G401 (cell line): ENCODE measurements at regions of chr10 and their contacts with region 1.

Region 1: DNA sequence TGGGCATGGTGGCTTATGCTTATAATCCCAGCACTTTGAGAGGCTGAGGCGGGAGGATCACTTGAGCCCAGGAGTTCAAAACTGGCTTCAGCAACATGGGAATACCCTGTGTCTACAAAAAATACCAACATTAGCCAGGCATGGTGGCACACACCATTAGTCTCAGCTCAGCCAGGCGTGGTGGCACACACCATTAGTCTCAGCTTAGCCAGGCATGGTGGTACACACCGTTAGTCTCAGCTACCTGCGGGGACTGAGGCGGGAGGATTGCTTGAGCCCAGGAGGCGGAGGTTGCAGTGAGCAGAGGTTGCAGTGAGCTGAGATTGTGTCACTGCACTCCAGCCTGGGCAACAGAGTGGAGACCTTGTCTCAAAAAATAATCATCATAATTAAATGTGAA is 9.0 kb downstream of the LRRC27 start:
- DNase-seq: no peak

Region 2: GRCh38 chr10:132229834-132230556 is 111.0 kb before region 1 on chr10:
- in situ Hi-C with region 1: loop called (anchors 5 kb)
- DNase-seq: peak; percentile 62

Region 3: GRCh38 chr10:132387764-132388210 is 46.8 kb after region 1 on chr10:
- in situ Hi-C with region 1: no loop called
- DNase-seq: no peak